B cell (primary cell): ENCODE measurements at regions of chr19 and their contacts with region 1.

Region 1: GRCh38 chr19:51607920-51608562 is 22.2 kb downstream of the SIGLEC5 start:
- DNase-seq: peak; percentile 85
- ATAC-seq: no peak
- H3K4me3 ChIP-seq: no peak overlapping the region
- H3K4me3 Mint-ChIP-seq: peak overlapping the region; percentile 82
- H3K27ac ChIP-seq: peak overlapping the region in 1 of 2 donors; percentile 82
- H3K27ac Mint-ChIP-seq: peak overlapping the region; percentile 95
- H3K4me1 ChIP-seq: peaks cover 36 to 37% of the 10 kb centered on the region in 2 donors
- H3K4me1 Mint-ChIP-seq: peaks cover 57% of the 10 kb centered on the region
- H3K27me3 ChIP-seq: no peaks in the 10 kb centered on the region
- H3K27me3 Mint-ChIP-seq: no peaks in the 10 kb centered on the region
- CTCF ChIP-seq: peak; percentile 55

Region 2: GRCh38 chr19:51282335-51282734 is 325.7 kb before region 1 on chr19:
- CTCF ChIA-PET with region 1: no interaction called
- POLR2A ChIA-PET with region 1: no interaction called
- intact Hi-C with region 1: no loop called
- DNase-seq: no peak
- ATAC-seq: no peak
- H3K4me3 ChIP-seq: no peak overlapping the region
- H3K4me3 Mint-ChIP-seq: no peak overlapping the region
- H3K27ac ChIP-seq: no peak overlapping the region
- H3K27ac Mint-ChIP-seq: no peak overlapping the region
- H3K4me1 ChIP-seq: no peaks in the 10 kb centered on the region
- H3K4me1 Mint-ChIP-seq: no peaks in the 10 kb centered on the region
- H3K27me3 ChIP-seq: peaks cover 0 to 11% (median 0%) of the 10 kb centered on the region in 4 experiments
- H3K27me3 Mint-ChIP-seq: peaks cover 23% of the 10 kb centered on the region
- CTCF ChIP-seq: no peak

Region 3: GRCh38 chr19:51367565-51368365 is 240.3 kb before region 1 on chr19:
- CTCF ChIA-PET with region 1: no interaction called
- POLR2A ChIA-PET with region 1: no interaction called
- intact Hi-C with region 1: loop called (anchors 2 kb)
- DNase-seq: peak; percentile 98
- ATAC-seq: peak; percentile 85
- H3K4me3 ChIP-seq: peak overlapping the region; percentile 73 to 94 (median 78)
- H3K4me3 Mint-ChIP-seq: peak overlapping the region; percentile 97
- H3K27ac ChIP-seq: peak overlapping the region; percentile 80 to 87
- H3K27ac Mint-ChIP-seq: peak overlapping the region; percentile 95
- H3K4me1 ChIP-seq: peaks cover 5 to 36% of the 10 kb centered on the region in 2 donors
- H3K4me1 Mint-ChIP-seq: peaks cover 37% of the 10 kb centered on the region
- H3K27me3 ChIP-seq: no peaks in the 10 kb centered on the region
- H3K27me3 Mint-ChIP-seq: no peaks in the 10 kb centered on the region
- CTCF ChIP-seq: no peak

Region 4: DNA sequence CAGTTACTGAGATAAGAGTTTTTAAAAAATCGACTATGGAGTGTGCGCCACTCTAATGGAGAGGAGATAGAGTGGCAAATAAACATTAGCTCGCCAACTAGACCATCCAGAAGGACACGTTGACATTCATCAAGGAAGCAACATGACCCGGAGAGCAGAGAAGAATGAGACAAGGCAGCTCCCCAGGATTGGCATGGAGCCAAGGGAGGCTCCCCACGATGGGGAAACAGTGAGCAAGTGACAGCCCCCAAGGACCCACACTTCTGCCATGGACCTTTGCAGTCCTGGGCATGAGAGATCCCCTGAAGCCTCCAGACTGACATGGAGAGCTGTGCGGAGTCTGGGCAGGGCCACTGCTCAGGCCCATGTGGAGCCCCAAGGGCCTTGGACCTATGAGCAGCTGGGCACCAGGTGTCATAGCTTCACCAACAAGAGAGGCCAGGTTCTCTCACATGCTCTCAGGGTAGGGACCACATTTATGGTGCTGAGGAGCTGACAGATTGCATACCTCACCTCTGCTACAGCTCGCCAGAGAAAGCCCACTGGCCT is 83.3 kb before region 1 on chr19:
- CTCF ChIA-PET with region 1: no interaction called
- POLR2A ChIA-PET with region 1: no interaction called
- intact Hi-C with region 1: no loop called
- DNase-seq: no peak
- ATAC-seq: no peak
- H3K4me3 ChIP-seq: no peak overlapping the region
- H3K4me3 Mint-ChIP-seq: no peak overlapping the region
- H3K27ac ChIP-seq: no peak overlapping the region
- H3K27ac Mint-ChIP-seq: no peak overlapping the region
- H3K4me1 ChIP-seq: peaks cover 14 to 36% of the 10 kb centered on the region in 2 donors
- H3K4me1 Mint-ChIP-seq: peaks cover 70% of the 10 kb centered on the region
- H3K27me3 ChIP-seq: no peaks in the 10 kb centered on the region
- H3K27me3 Mint-ChIP-seq: no peaks in the 10 kb centered on the region
- CTCF ChIP-seq: no peak

Region 5: GRCh38 chr19:51552996-51553725 is 54.9 kb before region 1 on chr19:
- CTCF ChIA-PET with region 1: interaction called, 5 read pairs
- POLR2A ChIA-PET with region 1: interaction called, 3 read pairs
- intact Hi-C with region 1: loop called (anchors 1 kb)
- DNase-seq: peak; percentile 74
- ATAC-seq: no peak
- H3K4me3 ChIP-seq: peak overlapping the region in 4 of 5 experiments; percentile 55 to 87 (median 74)
- H3K4me3 Mint-ChIP-seq: peak overlapping the region; percentile 95
- H3K27ac ChIP-seq: no peak overlapping the region
- H3K27ac Mint-ChIP-seq: no peak overlapping the region
- H3K4me1 ChIP-seq: peaks cover 43 to 61% of the 10 kb centered on the region in 2 donors
- H3K4me1 Mint-ChIP-seq: peaks cover 78% of the 10 kb centered on the region
- H3K27me3 ChIP-seq: no peaks in the 10 kb centered on the region
- H3K27me3 Mint-ChIP-seq: no peaks in the 10 kb centered on the region
- CTCF ChIP-seq: no peak

Region 6: GRCh38 chr19:51593969-51594773 is 13.9 kb before region 1 on chr19:
- CTCF ChIA-PET with region 1: interaction called, 22 read pairs
- POLR2A ChIA-PET with region 1: no interaction called
- intact Hi-C with region 1: loop called (anchors 1 kb)
- DNase-seq: peak; percentile 97
- ATAC-seq: peak; percentile 100
- H3K4me3 ChIP-seq: peak overlapping the region; percentile 53 to 92 (median 88)
- H3K4me3 Mint-ChIP-seq: peak overlapping the region; percentile 92
- H3K27ac ChIP-seq: peak overlapping the region; percentile 19 to 55
- H3K27ac Mint-ChIP-seq: peak overlapping the region; percentile 84
- H3K4me1 ChIP-seq: peaks cover 16 to 21% of the 10 kb centered on the region in 2 donors
- H3K4me1 Mint-ChIP-seq: peaks cover 25% of the 10 kb centered on the region
- H3K27me3 ChIP-seq: no peaks in the 10 kb centered on the region
- H3K27me3 Mint-ChIP-seq: no peaks in the 10 kb centered on the region
- CTCF ChIP-seq: no peak

Region 7: GRCh38 chr19:51637362-51637978 is 29.4 kb after region 1 on chr19:
- CTCF ChIA-PET with region 1: interaction called, 25 read pairs
- POLR2A ChIA-PET with region 1: no interaction called
- intact Hi-C with region 1: no loop called
- DNase-seq: peak; percentile 67
- ATAC-seq: no peak
- H3K4me3 ChIP-seq: no peak overlapping the region
- H3K4me3 Mint-ChIP-seq: no peak overlapping the region
- H3K27ac ChIP-seq: no peak overlapping the region
- H3K27ac Mint-ChIP-seq: no peak overlapping the region
- H3K4me1 ChIP-seq: peaks cover 0 to 47% of the 10 kb centered on the region in 2 donors
- H3K4me1 Mint-ChIP-seq: peaks cover 27% of the 10 kb centered on the region
- H3K27me3 ChIP-seq: no peaks in the 10 kb centered on the region
- H3K27me3 Mint-ChIP-seq: no peaks in the 10 kb centered on the region
- CTCF ChIP-seq: peak; percentile 68